Activated T-helper 1 cell treated with anti-CD3 and anti-CD28 coated beads, Interleukin-12 subunit alpha, Interleukin-12 subunit beta, Interleukin-2, Interleukin-4 antibody, amounts not matched to agents 30 ng/mL and 10 ng/mL and 1 ng/mL, durations not matched to agents 14 hours and 24 hours and 36 hours (primary cell): ENCODE measurements at regions of chr3 and their contacts with region 1.

Region 1: GRCh38 chr3:18401300-18401961 is 23.7 kb downstream of the SATB1 start:
- DNase-seq: no peak
- H3K4me3 Mint-ChIP-seq: peak overlapping the region; percentile 73
- H3K27ac Mint-ChIP-seq: peak overlapping the region; percentile 83
- H3K4me1 Mint-ChIP-seq: peaks cover 100% of the 10 kb centered on the region
- H3K27me3 Mint-ChIP-seq: no peaks in the 10 kb centered on the region

Region 2: DNA sequence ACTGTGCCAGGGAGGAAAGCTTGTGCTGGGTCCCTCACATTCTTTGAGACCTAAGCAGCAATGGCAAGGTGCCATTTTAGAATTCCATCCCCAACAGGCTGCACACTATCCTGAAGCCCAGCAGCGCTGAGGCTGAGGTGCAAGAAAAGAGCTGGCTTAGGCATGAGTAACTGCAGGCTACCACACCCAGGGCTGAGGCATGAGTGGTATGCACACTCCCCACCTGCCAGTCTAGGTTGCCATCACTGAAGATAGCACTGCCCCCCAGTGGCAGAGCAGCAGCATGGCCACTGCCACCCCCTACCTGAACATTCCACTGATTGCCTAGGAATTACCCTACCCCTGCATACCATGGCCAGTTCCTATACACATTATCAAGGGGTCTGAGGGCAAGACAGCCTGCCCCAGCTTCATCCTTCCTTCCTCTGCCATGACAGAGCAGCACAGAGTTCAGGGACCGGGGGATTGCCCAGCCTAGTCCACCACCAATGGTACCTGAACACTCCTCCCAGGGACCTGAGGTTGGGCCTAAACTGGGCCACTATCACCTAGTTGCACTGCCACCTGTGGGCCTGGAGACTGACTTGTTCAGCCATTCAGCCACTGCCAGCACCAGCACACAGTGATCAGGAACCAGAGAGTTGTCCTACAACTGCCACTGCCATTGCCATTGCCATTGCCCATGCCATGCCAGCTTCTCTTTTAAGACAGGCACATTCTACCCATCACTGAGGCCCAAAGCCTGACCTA is 106.1 kb before region 1 on chr3:
- intact Hi-C with region 1: no loop called
- DNase-seq: no peak
- H3K4me3 Mint-ChIP-seq: no peak overlapping the region
- H3K27ac Mint-ChIP-seq: no peak overlapping the region
- H3K4me1 Mint-ChIP-seq: no peaks in the 10 kb centered on the region
- H3K27me3 Mint-ChIP-seq: peaks cover 19% of the 10 kb centered on the region

Region 3: GRCh38 chr3:18344306-18345014 is 57.0 kb before region 1 on chr3:
- intact Hi-C with region 1: no loop called
- DNase-seq: no peak
- H3K4me3 Mint-ChIP-seq: no peak overlapping the region
- H3K27ac Mint-ChIP-seq: no peak overlapping the region
- H3K4me1 Mint-ChIP-seq: peaks cover 15% of the 10 kb centered on the region
- H3K27me3 Mint-ChIP-seq: peaks cover 4% of the 10 kb centered on the region

Region 4: DNA sequence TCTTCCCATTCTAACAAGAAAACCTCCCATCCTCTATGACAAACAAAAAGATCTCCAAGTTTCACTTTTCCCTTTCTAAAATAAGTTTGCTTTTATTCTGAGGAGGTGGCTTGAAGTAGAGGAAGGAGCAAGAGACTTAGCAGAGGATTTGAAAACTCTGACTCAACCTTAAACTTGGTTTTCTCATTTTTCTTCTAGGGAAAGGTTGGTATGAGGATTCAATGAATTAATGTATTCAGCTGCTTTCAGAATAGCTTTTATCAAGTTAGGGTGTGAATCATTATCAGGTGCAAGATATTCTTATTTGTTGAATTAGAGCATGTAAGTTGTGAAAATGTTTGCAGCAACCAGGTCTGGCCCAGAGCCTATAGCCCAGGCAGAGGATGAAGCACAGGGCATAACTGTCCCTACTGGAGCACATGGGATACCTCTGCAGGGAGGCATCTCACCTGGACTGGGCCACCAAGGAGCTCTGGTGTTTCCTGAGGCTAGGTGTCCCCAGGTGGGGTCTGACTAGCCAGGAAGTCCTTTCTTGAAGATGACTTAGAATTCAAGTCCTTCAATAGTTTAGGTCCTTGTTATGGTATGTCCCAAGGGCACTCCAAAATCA is 18.6 kb before region 1 on chr3:
- intact Hi-C with region 1: no loop called
- DNase-seq: no peak
- H3K4me3 Mint-ChIP-seq: peak overlapping the region; percentile 7
- H3K27ac Mint-ChIP-seq: peak overlapping the region; percentile 77
- H3K4me1 Mint-ChIP-seq: peaks cover 77% of the 10 kb centered on the region
- H3K27me3 Mint-ChIP-seq: no peaks in the 10 kb centered on the region

Region 5: DNA sequence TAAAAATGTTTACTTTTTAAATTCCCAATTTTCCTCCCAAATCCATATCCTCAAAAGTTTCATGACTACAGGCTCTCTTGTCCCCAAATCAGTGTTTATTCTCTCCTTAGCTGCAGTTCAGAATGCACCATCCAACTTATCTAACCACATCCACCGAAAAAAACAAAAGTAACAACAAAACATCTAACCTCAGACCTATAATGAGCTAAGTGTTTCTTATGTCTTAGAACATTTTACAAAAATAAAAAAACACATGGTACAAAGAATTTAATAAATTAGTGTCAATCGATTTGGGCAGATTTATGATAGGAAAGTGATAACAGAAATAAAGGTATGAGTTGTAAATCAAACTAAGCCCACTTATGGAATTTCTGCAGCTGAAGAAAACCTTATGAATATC is 10.1 kb after region 1 on chr3:
- intact Hi-C with region 1: loop called (anchors 1 kb)
- DNase-seq: no peak
- H3K4me3 Mint-ChIP-seq: peak overlapping the region; percentile 63
- H3K27ac Mint-ChIP-seq: peak overlapping the region; percentile 87
- H3K4me1 Mint-ChIP-seq: peaks cover 89% of the 10 kb centered on the region
- H3K27me3 Mint-ChIP-seq: no peaks in the 10 kb centered on the region

Region 6: GRCh38 chr3:18419232-18419631 is 17.8 kb after region 1 on chr3:
- intact Hi-C with region 1: loop called (anchors 2 kb)
- DNase-seq: no peak
- H3K4me3 Mint-ChIP-seq: peak overlapping the region; percentile 85
- H3K27ac Mint-ChIP-seq: peak overlapping the region; percentile 95
- H3K4me1 Mint-ChIP-seq: peaks cover 84% of the 10 kb centered on the region
- H3K27me3 Mint-ChIP-seq: peaks cover 2% of the 10 kb centered on the region

Region 7: DNA sequence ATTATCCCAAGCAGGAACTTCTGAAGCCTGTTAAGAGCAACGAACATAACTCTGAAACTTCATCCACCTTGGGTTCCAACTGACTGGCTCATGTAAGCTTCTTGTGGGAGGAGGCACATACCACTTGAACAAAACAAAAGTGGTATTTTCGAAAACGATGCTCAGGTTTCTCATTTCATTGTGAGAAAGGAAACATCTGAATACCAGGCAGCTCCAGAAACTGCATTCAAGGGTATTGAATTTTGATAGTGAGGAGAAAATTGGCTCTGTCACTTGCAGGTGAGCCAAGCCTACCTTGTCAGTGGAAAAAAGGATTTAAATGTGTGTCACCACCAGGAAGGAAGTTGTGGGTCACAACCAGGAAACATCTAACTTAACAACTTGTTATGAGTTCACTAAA is 241.8 kb after region 1 on chr3:
- intact Hi-C with region 1: no loop called
- DNase-seq: no peak
- H3K4me3 Mint-ChIP-seq: no peak overlapping the region
- H3K27ac Mint-ChIP-seq: peak overlapping the region; percentile 57
- H3K4me1 Mint-ChIP-seq: peaks cover 68% of the 10 kb centered on the region
- H3K27me3 Mint-ChIP-seq: no peaks in the 10 kb centered on the region